CD4-positive, alpha-beta T cell (primary cell): ENCODE measurements at regions of chr1 and their contacts with region 1.

Region 1: DNA sequence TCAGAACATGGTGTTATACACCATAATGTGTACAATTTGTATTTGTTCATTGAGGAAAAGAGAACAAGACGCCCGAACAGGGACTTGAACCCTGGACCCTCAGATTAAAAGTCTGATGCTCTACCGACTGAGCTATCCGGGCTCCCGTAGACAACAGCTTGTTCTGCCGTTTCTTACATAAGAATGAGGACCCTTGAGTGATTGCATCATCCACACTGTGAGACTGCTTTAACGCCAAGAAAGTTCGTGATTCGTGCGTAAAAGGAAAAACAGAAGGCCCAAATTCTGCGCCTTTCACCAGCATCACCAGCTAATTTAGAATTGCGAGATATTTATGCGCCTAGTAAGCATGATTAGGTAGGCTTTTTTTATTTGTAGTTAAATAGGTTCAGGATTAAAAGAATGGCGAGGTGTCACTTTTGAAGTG is 9.2 kb upstream of the MDM4 start:
- DNase-seq: peak; percentile 72 to 97 (median 82)
- ATAC-seq: peak; percentile 75
- H3K4me3 ChIP-seq: peak overlapping the region; percentile 61
- H3K4me3 Mint-ChIP-seq: peak overlapping the region; percentile 91
- H3K27ac ChIP-seq: peak overlapping the region; percentile 86 to 93
- H3K27ac Mint-ChIP-seq: peak overlapping the region; percentile 99
- H3K4me1 ChIP-seq: peaks cover 22% of the 10 kb centered on the region
- H3K4me1 Mint-ChIP-seq: peaks cover 53% of the 10 kb centered on the region
- H3K27me3 ChIP-seq: no peaks in the 10 kb centered on the region
- H3K27me3 Mint-ChIP-seq: peaks cover 15% of the 10 kb centered on the region
- CTCF ChIP-seq: no peak

Region 2: DNA sequence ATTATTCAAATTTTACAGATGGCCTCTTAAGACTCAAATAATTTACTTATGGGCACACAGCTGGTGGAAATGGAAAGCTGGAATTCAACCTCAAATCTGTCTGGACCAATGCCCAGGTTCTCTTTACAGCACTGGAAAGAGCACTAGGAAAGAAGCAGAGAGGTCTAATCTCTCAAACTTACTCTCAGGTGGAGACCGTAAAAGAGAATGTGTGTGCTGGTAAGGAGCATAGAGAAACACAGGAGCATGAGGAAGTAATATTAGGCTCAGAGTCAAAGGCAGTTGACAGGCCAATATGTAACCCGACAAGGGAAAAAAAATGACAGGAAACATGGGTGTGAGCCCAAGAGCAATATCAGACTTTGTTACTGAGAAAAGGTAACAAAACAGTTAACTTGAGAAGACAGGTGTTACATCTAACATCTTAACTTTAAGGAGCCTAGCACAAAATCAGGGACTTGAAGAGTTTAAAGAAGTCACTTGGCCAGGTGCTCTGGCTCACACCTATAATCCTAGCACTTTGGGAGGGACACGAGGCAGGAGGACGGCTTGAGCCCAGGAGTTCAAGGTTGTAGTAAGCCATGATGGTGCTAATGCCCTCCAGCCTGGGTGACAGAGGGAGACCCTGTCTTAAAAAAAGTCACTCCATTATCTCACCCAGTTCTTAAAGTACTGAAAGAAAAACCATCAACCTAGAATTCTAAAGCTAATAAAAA is 116.1 kb before region 1 on chr1:
- CTCF ChIA-PET with region 1: no interaction called
- POLR2A ChIA-PET with region 1: no interaction called
- intact Hi-C with region 1: no loop called
- DNase-seq: no peak
- ATAC-seq: no peak
- H3K4me3 ChIP-seq: no peak overlapping the region
- H3K4me3 Mint-ChIP-seq: no peak overlapping the region
- H3K27ac ChIP-seq: no peak overlapping the region
- H3K27ac Mint-ChIP-seq: no peak overlapping the region
- H3K4me1 ChIP-seq: no peaks in the 10 kb centered on the region
- H3K4me1 Mint-ChIP-seq: peaks cover 24% of the 10 kb centered on the region
- H3K27me3 ChIP-seq: no peaks in the 10 kb centered on the region
- H3K27me3 Mint-ChIP-seq: no peaks in the 10 kb centered on the region
- CTCF ChIP-seq: no peak

Region 3: DNA sequence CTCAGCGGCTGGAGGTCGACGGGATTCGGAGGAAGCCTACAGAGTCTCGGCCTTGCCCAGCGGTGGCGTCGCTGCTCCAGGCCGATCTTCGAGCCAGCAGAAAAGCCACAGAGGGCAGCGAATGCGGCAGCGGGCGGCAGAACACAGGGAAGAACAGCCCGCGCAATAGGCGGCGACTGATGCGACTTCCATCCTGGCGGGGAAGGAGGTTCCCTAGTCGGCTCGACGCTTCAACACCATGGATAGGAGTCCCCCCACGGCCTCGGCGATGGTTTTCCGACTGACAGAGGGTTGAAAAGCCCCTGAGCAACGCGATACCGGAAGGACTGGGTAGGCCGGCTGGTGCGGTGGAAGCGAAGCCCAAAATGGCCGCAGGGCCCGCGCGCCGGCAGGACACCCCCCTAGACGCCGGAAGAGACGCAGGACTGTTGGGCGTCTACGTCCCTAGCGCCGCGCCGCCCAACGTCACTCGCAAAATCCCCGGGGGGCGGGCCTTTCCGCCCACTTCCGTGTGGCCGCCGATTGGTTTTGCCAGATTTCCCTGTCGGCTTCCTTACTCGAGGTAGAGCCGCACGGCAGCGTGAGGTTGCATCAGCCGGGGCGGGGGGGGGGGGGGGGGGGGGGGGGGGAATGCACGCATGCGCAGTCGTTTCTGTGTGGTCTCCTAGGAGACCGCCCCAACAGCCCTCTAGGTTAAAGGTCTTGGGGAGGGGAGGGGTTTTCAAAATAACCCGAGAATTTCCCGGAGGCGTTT is 95.3 kb before region 1 on chr1 and contains the start of gene PPP1R15B:
- CTCF ChIA-PET with region 1: interaction called, 7 read pairs
- POLR2A ChIA-PET with region 1: interaction called, 6 read pairs
- intact Hi-C with region 1: loop called in 1 of 2 experiments (anchors 2 kb)
- DNase-seq: peak; percentile 95 to 99 (median 97)
- ATAC-seq: peak; percentile 89
- H3K4me3 ChIP-seq: peak within 1 kb of the TSS; percentile 98
- H3K4me3 Mint-ChIP-seq: peak within 1 kb of the TSS; percentile 100
- H3K27ac ChIP-seq: peak within 1 kb of the TSS; percentile 100
- H3K27ac Mint-ChIP-seq: peak within 1 kb of the TSS; percentile 100
- H3K4me1 ChIP-seq: peaks cover 11% of the 10 kb centered on the region
- H3K4me1 Mint-ChIP-seq: peaks cover 25% of the 10 kb centered on the region
- H3K27me3 ChIP-seq: no peaks in the 10 kb centered on the region
- H3K27me3 Mint-ChIP-seq: no peaks in the 10 kb centered on the region
- CTCF ChIP-seq: no peak
- total RNA-seq, gene PPP1R15B: 171 to 179 TPM

Region 4: DNA sequence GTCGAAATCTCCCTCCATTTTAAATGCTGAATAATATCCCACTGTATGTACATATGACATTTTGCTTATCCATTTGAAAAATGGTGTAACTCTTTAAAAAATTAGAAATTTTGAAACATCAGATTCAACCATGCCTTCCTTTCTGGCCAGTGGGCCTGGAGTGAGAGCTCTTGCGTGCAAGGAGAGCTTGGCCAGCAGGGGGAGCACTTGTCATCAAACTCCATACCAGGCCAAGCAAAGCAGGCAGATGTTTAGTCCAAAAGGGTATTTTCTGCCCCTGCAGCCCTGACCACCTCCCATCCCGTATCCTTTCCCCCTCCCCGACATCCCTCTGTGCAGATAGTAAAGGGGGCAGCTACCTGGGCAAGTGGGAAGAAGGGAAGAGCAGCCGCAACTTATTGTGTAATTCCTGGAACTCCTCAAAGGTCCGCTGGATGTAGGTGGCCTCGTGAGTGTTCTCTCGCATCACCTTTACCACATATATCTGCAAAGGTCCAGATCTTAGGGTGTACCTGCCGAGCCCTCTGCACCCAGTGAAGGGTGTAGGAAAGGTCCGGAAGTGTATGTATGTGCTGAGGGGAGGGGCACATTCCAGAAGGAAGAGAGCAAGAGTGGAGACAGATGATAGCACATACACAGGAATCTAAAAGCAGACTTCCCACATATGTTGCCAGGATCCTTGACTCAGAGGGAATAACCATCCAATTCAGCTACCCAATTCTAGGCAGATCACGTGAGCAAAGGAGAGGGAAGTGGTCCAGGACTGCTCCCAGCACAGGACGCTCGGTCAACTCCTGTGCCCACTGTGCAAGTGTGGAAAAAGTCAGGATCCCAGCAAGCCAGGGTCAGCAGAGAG is 75.4 kb before region 1 on chr1:
- CTCF ChIA-PET with region 1: interaction called, 34 read pairs
- POLR2A ChIA-PET with region 1: interaction called, 14 read pairs
- intact Hi-C with region 1: loop called in 1 of 2 experiments (anchors 1 kb)
- DNase-seq: peak; percentile 68 to 90 (median 76)
- ATAC-seq: peak; percentile 90
- H3K4me3 ChIP-seq: no peak overlapping the region
- H3K4me3 Mint-ChIP-seq: no peak overlapping the region
- H3K27ac ChIP-seq: no peak overlapping the region
- H3K27ac Mint-ChIP-seq: no peak overlapping the region
- H3K4me1 ChIP-seq: peaks cover 3% of the 10 kb centered on the region
- H3K4me1 Mint-ChIP-seq: no peaks in the 10 kb centered on the region
- H3K27me3 ChIP-seq: no peaks in the 10 kb centered on the region
- H3K27me3 Mint-ChIP-seq: no peaks in the 10 kb centered on the region
- CTCF ChIP-seq: peak; percentile 97

Region 5: GRCh38 chr1:204494281-204495077 is 12.5 kb before region 1 on chr1 and contains the start of gene PIK3C2B:
- CTCF ChIA-PET with region 1: interaction called, 50 read pairs
- POLR2A ChIA-PET with region 1: interaction called, 79 read pairs
- intact Hi-C with region 1: no loop called
- DNase-seq: peak; percentile 46 to 86 (median 59)
- ATAC-seq: peak; percentile 71
- H3K4me3 ChIP-seq: peak within 1 kb of the TSS; percentile 70
- H3K4me3 Mint-ChIP-seq: peak within 1 kb of the TSS; percentile 91
- H3K27ac ChIP-seq: peak within 1 kb of the TSS; percentile 61 to 95
- H3K27ac Mint-ChIP-seq: peak within 1 kb of the TSS; percentile 88
- H3K4me1 ChIP-seq: peaks cover 57% of the 10 kb centered on the region
- H3K4me1 Mint-ChIP-seq: peaks cover 65% of the 10 kb centered on the region
- H3K27me3 ChIP-seq: no peaks in the 10 kb centered on the region
- H3K27me3 Mint-ChIP-seq: no peaks in the 10 kb centered on the region
- CTCF ChIP-seq: peak; percentile 30
- total RNA-seq, gene PIK3C2B: 25.5 to 27.1 TPM

Region 6: DNA sequence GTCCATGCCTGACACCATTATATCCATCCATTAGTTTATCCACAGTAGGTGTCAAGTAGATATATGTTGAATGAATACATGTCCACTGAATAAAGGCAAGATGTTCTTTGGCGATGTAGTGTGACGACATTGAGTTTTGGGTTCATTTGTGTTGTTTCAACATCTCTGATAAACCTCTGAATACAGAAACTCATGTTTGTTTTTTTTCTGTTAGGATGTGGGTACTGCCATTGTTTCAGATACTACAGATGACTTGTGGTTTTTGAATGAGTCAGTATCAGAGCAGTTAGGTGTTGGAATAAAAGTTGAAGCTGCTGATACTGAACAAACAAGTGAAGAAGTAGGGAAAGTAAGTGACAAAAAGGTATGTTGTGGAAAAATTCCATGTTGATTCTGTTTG is 37.3 kb after region 1 on chr1:
- CTCF ChIA-PET with region 1: interaction called, 8 read pairs
- POLR2A ChIA-PET with region 1: interaction called, 26 read pairs
- intact Hi-C with region 1: loop called (anchors 1 to 5 kb)
- DNase-seq: peak in 3 of 14 experiments; percentile 70 to 84 (median 75)
- ATAC-seq: peak; percentile 94
- H3K4me3 ChIP-seq: no peak overlapping the region
- H3K4me3 Mint-ChIP-seq: peak overlapping the region; percentile 49
- H3K27ac ChIP-seq: peak overlapping the region; percentile 41 to 65
- H3K27ac Mint-ChIP-seq: peak overlapping the region; percentile 84
- H3K4me1 ChIP-seq: peaks cover 28% of the 10 kb centered on the region
- H3K4me1 Mint-ChIP-seq: peaks cover 63% of the 10 kb centered on the region
- H3K27me3 ChIP-seq: no peaks in the 10 kb centered on the region
- H3K27me3 Mint-ChIP-seq: no peaks in the 10 kb centered on the region
- CTCF ChIP-seq: no peak

Region 7: DNA sequence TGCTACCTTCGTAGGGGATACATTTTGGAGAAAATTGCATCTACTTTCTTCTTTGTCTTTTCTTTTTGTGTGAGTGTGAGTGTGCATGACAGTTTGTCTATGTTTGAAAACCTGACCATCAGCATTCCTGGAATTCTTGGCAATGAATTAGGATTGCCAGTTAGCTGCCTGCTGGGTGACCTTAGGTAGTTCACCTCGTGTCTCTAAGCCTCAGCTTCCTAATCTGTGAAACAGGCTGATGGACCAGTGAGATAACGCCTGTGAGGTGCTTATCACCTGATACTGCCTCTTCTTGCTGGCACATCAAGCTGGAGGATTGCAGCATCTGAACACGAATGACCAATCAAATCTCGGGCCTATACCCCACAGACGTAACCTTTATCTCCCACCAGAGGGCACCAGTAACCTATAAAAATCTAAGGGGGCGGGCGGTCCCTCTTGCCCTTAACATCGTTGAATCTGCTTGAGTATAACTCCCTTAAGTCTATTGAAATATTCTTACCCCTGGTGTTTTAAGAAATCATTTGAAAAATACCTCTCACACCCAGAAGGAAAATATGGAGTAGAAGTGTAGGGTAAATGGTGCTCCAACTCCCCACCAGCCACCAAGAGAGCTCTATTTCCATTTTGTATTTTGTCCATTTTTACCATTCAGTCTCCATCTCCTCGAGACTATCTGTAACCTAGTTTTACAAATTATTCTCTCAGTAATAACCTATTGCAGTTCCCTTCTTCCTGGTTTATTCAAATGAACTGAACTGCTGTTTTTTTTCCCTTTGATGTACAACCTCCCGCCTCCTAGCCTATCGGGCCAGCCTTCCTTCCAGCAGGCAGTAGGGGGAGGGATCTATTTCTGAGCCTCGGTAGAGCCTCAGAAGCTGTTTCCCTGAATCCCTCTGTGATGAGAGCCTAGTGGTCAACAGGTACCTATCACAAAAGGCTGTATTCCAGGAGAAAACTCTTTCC is 58.9 kb after region 1 on chr1:
- CTCF ChIA-PET with region 1: interaction called, 10 read pairs
- POLR2A ChIA-PET with region 1: interaction called, 6 read pairs
- intact Hi-C with region 1: no loop called
- DNase-seq: peak; percentile 24 to 85 (median 43)
- ATAC-seq: peak; percentile 87
- H3K4me3 ChIP-seq: no peak overlapping the region
- H3K4me3 Mint-ChIP-seq: no peak overlapping the region
- H3K27ac ChIP-seq: no peak overlapping the region
- H3K27ac Mint-ChIP-seq: peak overlapping the region; percentile 80
- H3K4me1 ChIP-seq: peaks cover 37% of the 10 kb centered on the region
- H3K4me1 Mint-ChIP-seq: peaks cover 54% of the 10 kb centered on the region
- H3K27me3 ChIP-seq: no peaks in the 10 kb centered on the region
- H3K27me3 Mint-ChIP-seq: no peaks in the 10 kb centered on the region
- CTCF ChIP-seq: peak; percentile 66

Region 8: GRCh38 chr1:204763706-204764427 is 256.9 kb after region 1 on chr1:
- CTCF ChIA-PET with region 1: no interaction called
- POLR2A ChIA-PET with region 1: no interaction called
- intact Hi-C with region 1: no loop called
- DNase-seq: peak; percentile 37 to 80 (median 56)
- ATAC-seq: peak; percentile 98
- H3K4me3 ChIP-seq: no peak overlapping the region
- H3K4me3 Mint-ChIP-seq: peak overlapping the region; percentile 30
- H3K27ac ChIP-seq: no peak overlapping the region
- H3K27ac Mint-ChIP-seq: no peak overlapping the region
- H3K4me1 ChIP-seq: peaks cover 8% of the 10 kb centered on the region
- H3K4me1 Mint-ChIP-seq: peaks cover 7% of the 10 kb centered on the region
- H3K27me3 ChIP-seq: peaks cover 0 to 3% of the 10 kb centered on the region in 2 experiments
- H3K27me3 Mint-ChIP-seq: peaks cover 24% of the 10 kb centered on the region
- CTCF ChIP-seq: peak; percentile 78